Breast epithelium (tissue), 4 donors: ENCODE measurements at regions of chr3 and their contacts with region 1.

Region 1: GRCh38 chr3:127105587-127105986 is 87.3 kb upstream of the PRR23E start:
- DNase-seq: peak in 1 of 2 donors; percentile 28
- H3K4me3 ChIP-seq: no peak overlapping the region
- H3K27ac ChIP-seq: no peak overlapping the region
- H3K4me1 ChIP-seq: no peaks in the 10 kb centered on the region
- H3K27me3 ChIP-seq: peaks cover 0 to 5% of the 10 kb centered on the region in 2 donors
- CTCF ChIP-seq: no peak
- POLR2A ChIP-seq: no peak

Region 2: DNA sequence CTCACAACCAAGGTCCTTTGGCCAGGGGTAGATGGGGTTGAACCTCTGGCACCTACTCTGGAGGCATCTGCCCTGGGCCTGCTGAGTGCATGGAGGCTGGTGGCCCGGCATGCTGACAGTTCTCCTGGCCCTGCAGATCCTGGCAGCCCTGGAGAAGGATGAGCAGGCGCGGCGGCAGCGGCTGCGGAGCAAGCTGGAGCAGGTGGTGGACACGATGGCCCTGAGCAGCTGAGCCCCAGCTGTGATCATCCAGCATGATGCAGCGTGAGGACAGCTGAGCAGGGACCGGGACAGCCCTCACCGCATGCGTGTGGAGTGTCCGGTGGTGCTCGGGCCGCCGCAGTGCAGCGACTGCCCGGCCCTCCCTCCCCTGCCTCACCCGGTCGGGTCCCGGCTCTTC is 71.8 kb before region 1 on chr3:
- intact Hi-C with region 1: no loop called
- DNase-seq: no peak
- H3K4me3 ChIP-seq: no peak overlapping the region
- H3K27ac ChIP-seq: peak overlapping the region in 1 of 2 donors; percentile 74
- H3K4me1 ChIP-seq: no peaks in the 10 kb centered on the region
- H3K27me3 ChIP-seq: no peaks in the 10 kb centered on the region
- CTCF ChIP-seq: no peak
- POLR2A ChIP-seq: no peak

Region 3: DNA sequence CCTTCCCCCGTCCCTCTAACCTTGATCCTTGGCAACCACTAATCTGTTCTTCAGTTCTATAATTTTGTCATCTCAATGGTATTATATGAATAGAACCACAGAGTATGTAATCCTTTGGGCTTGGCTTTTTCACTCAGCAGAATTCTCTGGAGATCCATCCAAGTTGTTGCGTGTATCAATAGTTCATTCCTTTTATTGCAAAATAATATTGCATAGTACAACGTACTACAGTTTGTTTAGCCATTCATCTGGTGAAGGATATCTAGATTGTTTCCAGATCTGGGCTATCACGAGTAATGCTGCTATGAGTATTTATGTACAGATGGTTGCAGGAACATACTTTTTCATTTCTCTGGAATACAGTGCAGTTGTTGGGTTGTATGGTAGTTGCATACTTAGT is 46.5 kb before region 1 on chr3:
- intact Hi-C with region 1: loop called (anchors 1 kb)
- DNase-seq: no peak
- H3K4me3 ChIP-seq: no peak overlapping the region
- H3K27ac ChIP-seq: no peak overlapping the region
- H3K4me1 ChIP-seq: peaks cover 0 to 1% of the 10 kb centered on the region in 2 donors
- H3K27me3 ChIP-seq: no peaks in the 10 kb centered on the region
- CTCF ChIP-seq: no peak
- POLR2A ChIP-seq: no peak

Region 4: DNA sequence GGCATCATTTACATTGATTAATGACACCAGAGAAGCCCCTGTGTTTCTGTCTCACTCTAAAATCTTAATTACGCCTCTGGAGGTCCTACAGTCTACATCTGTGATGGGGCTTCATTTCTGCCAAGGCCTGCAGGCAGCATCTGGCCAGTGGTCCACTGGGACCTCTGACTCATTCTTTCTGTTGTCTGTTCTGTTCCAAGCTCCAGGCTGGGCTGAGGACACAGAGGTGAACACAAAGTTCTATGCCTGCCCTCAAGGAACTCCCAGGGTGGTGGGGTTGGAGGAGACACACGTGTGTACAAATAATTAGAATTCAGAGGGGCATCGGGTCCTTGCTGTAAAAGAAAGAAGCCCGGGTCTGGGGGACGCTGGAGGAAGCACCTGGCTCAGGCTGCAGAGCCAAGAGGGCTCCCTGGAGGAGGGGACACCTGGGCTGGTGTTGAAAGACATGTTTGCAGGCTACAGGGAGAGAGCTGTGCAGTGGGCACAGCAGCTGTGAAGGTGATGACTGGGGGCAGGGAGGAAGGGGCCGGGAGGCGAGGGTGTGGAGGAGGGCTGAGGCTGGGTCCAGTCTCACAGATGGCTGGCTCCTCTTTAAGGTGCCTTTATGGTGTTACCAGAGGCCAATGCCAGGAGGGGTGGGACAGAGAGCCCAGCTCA is 16.0 kb before region 1 on chr3:
- intact Hi-C with region 1: no loop called
- DNase-seq: no peak
- H3K4me3 ChIP-seq: no peak overlapping the region
- H3K27ac ChIP-seq: no peak overlapping the region
- H3K4me1 ChIP-seq: no peaks in the 10 kb centered on the region
- H3K27me3 ChIP-seq: peaks cover 0 to 7% of the 10 kb centered on the region in 2 donors
- CTCF ChIP-seq: no peak
- POLR2A ChIP-seq: no peak

Region 5: GRCh38 chr3:127177231-127177630 is 71.6 kb after region 1 on chr3:
- intact Hi-C with region 1: no loop called
- DNase-seq: peak in 1 of 2 donors; percentile 14
- H3K4me3 ChIP-seq: no peak overlapping the region
- H3K27ac ChIP-seq: no peak overlapping the region
- H3K4me1 ChIP-seq: no peaks in the 10 kb centered on the region
- H3K27me3 ChIP-seq: no peaks in the 10 kb centered on the region
- CTCF ChIP-seq: no peak
- POLR2A ChIP-seq: no peak